Activated T-helper 2 cell treated with anti-CD3 and anti-CD28 coated beads, Interferon-gamma antibody, Interleukin-2, Interleukin-4, amounts not matched to agents 10 μg/mL and 5 μg/mL and 100 μg/mL, durations not matched to agents 14 hours and 24 hours and 36 hours (primary cell): ENCODE measurements at regions of chr12 and their contacts with region 1.

Region 1: DNA sequence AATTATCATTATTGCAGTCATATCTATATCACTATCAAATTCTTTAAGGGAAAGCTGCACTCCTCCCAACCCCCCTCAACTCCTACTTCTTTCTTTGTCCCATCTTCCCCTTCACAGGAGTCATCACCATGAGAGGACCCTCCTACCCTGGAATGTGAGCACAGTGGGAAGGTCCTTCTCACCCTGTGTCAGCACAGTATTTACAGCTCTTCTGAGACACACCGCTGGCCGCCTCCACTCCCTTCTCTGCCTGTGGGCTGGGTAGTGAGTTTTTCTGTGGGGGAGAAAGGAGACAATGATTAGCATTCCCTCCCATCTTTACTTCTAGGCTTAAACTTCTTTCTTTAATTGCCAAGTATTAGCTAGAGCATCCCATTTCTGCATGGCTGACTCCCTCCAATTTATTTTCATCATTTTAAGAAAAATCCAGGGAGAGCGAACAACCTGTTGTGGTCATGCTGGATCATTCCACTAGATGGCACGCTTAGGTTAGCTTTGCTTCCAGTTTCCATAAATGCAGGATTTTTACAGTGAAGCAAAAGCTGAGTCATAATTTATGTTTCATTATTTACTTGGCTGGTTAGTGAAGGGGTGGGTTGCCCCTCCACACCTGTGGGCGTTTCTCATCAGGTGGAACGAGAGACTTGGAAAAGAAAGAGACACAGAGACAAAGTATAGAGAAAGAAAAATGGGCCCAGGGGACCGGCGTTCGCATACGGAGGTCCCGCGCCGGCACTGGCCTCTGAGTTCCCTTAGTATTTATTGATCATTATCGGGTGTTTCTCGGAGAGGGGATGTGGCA is 188.5 kb downstream of the ALX1 start:
- DNase-seq: peak; percentile 22
- H3K4me3 Mint-ChIP-seq: peak overlapping the region; percentile 77
- H3K27ac Mint-ChIP-seq: peak overlapping the region; percentile 48
- H3K4me1 Mint-ChIP-seq: peaks cover 17% of the 10 kb centered on the region
- H3K27me3 Mint-ChIP-seq: peaks cover 15% of the 10 kb centered on the region

Region 2: GRCh38 chr12:84785951-84786350 is 682.6 kb before region 1 on chr12:
- intact Hi-C with region 1: no loop called
- DNase-seq: no peak
- H3K4me3 Mint-ChIP-seq: no peak overlapping the region
- H3K27ac Mint-ChIP-seq: no peak overlapping the region
- H3K4me1 Mint-ChIP-seq: no peaks in the 10 kb centered on the region
- H3K27me3 Mint-ChIP-seq: no peaks in the 10 kb centered on the region

Region 3: GRCh38 chr12:85296362-85296761 is 172.2 kb before region 1 on chr12:
- intact Hi-C with region 1: no loop called
- DNase-seq: no peak
- H3K4me3 Mint-ChIP-seq: no peak overlapping the region
- H3K27ac Mint-ChIP-seq: no peak overlapping the region
- H3K4me1 Mint-ChIP-seq: peaks cover 6% of the 10 kb centered on the region
- H3K27me3 Mint-ChIP-seq: no peaks in the 10 kb centered on the region

Region 4: DNA sequence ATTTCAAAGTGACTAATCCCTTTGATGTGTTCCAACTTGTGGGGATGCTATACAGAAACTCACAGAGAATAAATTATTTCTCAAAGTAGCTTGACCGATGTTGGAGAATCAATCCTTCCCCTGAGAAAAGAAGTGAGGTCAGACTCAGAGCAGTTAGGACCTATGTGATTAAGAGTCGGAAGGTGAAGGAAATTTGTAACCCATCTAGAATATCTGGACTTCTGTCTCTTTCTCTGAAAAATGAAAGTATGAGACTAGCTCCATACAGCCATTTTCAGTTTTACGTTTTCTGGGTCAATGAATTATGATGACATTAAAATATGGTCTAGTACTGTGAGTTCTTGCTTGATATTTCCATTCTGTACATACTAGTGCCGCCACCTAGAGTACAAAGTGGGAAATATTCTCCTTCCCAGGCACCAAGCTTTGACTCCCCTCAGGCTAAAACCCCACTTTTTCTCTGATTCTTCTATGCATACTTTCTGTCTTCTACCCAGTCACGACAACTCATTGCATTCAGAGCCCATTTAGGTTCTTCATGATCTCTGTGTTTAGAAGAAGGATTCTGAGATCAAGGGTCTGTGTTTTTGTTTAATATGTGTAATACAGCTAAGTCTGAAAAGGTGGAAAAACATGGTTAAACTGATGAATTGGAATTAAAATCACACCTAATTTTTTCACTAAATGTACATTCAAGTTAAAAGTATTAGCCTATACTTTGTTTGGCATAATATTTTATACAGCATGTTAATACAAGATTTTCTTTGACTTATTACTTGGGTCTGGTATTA is 398.6 kb after region 1 on chr12:
- intact Hi-C with region 1: loop called (anchors 1 kb)
- DNase-seq: no peak
- H3K4me3 Mint-ChIP-seq: no peak overlapping the region
- H3K27ac Mint-ChIP-seq: no peak overlapping the region
- H3K4me1 Mint-ChIP-seq: no peaks in the 10 kb centered on the region
- H3K27me3 Mint-ChIP-seq: no peaks in the 10 kb centered on the region

Region 5: GRCh38 chr12:85872497-85873091 is 404.0 kb after region 1 on chr12:
- intact Hi-C with region 1: loop called (anchors 1 kb)
- DNase-seq: no peak
- H3K4me3 Mint-ChIP-seq: no peak overlapping the region
- H3K27ac Mint-ChIP-seq: no peak overlapping the region
- H3K4me1 Mint-ChIP-seq: no peaks in the 10 kb centered on the region
- H3K27me3 Mint-ChIP-seq: no peaks in the 10 kb centered on the region

Region 6: DNA sequence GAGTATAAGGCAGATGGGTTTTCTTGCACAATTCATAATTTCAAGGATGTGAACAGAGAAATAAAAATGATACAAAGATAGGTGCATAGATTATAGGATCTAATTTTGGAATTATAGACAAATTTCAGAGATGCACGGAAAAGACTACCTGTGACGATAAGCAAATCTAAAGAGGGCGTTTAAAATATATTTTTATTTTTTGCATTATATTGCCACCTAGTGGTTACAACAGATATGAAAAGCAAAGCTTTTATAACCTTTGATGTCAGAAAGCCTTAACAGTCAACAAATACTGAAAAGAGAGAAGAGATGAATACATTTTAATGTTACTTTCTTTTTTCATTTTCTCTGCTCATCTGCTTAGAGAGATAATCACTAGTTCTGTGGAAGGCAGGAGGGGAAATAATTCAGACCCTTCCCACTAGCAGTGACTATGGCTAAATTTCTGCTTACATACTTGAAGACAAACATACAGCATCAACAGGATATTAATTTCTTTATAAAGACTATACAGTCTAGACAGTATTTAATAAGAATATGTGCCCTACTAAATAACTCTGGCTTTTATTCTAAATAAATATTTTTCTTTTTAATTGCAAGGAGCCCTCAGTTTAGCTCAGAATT is 451.9 kb after region 1 on chr12:
- intact Hi-C with region 1: loop called (anchors 2 kb)
- DNase-seq: no peak
- H3K4me3 Mint-ChIP-seq: no peak overlapping the region
- H3K27ac Mint-ChIP-seq: no peak overlapping the region
- H3K4me1 Mint-ChIP-seq: no peaks in the 10 kb centered on the region
- H3K27me3 Mint-ChIP-seq: no peaks in the 10 kb centered on the region